ENCODE measurements at regions of chr10 and their contacts with region 1.

Region 1: DNA sequence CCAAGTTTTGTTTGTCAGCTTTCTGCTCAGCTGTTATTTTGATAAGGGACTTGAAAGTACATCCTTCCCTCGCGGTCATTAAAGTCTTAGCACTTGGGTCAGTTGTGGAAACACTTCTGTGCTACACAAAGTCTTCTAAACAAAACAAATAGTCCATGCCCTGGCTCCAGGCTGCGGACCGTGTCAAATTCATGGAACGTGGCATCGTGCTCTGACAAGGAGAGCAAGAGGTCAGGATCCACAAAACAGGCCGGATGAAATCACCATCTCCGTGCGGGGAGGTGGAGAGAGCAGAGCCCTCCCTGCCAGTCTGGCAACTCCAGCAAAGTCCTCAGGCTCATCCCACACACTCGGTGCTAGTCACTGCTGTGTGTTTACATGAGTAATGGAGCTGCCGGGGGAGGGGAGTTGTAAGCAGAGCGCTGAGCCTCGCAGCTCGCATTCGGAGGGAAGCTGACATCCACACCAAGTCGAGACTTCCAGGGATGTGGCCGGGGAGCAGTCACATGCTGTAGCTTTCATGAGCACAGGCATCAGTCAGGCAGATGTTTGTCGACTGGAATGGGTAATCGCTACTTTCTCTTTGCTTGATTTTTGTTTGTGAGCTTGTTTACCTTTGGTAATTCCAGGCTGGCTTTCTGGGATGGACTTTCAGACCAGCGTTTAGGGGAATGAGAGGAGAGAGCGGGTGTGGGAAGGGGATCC is 147.6 kb downstream of the ARID5B start:
- DNase-seq: peak; percentile 90
- ATAC-seq: peak; percentile 92

Region 2: GRCh38 chr10:62244780-62245467 is 195.9 kb after region 1 on chr10:
- intact Hi-C with region 1: loop called (anchors 10 kb)
- DNase-seq: no peak
- ATAC-seq: peak; percentile 77

Region 3: GRCh38 chr10:62399211-62399610 is 350.1 kb after region 1 on chr10:
- intact Hi-C with region 1: no loop called
- DNase-seq: no peak
- ATAC-seq: no peak

Measured in sciatic nerve (tissue), 2 donors.